ENCODE measurements at regions of chr1 and their contacts with region 1.

Region 1: GRCh38 chr1:16459352-16459925 is 18.9 kb downstream of the NECAP2 start:
- DNase-seq: no peak
- ATAC-seq: no peak
- H3K4me3 ChIP-seq: no peak overlapping the region
- H3K27ac ChIP-seq: no peak overlapping the region
- H3K4me1 ChIP-seq: no peaks in the 10 kb centered on the region
- H3K27me3 ChIP-seq: no peaks in the 10 kb centered on the region
- CTCF ChIP-seq: no peak

Region 2: DNA sequence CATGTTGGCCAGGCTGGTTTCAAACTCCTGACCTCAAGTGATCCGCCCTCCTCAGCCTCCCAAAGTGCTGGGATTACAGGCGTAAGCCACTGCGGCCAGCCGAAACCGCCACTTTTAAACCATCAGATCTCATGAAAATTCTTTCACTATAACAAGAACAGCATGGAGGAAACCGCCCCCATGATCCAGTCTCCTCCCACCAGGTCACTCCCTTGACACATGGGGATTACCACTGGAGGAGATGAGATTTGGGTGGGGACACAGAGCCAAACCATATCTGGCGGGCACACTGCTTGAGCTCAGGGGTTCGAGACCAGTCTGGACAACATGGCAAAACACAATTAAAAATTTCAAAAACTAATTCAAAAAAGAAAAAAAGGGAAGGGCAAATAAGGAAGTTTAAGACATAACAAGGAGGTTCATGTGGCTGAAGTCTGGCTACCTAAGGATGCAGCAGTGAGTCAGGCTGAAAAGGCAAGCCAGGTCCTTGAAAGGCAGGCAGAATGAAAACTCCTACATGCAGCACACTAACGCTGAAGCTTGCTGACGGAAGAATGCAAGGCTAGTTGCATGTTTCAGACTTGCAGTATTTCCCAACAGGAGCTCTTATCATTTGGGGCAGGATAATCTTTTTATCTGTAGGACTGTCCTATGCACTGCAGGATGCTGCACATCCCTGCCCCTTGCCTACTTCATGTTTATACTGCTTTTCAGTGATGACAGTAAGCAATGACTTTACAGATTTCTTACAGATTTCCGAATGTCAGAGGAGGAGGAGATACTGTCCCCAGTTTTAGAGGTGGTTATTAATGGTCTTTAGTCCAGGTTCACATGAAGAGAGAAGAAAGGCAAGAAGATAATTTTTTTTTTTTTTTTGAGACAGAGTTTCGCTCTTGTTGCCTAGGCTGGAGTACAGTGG is 156.5 kb before region 1 on chr1:
- CTCF ChIA-PET with region 1: no interaction called
- POLR2A ChIA-PET with region 1: no interaction called
- intact Hi-C with region 1: no loop called
- DNase-seq: no peak
- ATAC-seq: no peak
- H3K4me3 ChIP-seq: no peak overlapping the region
- H3K27ac ChIP-seq: no peak overlapping the region
- H3K4me1 ChIP-seq: no peaks in the 10 kb centered on the region
- H3K27me3 ChIP-seq: no peaks in the 10 kb centered on the region
- CTCF ChIP-seq: no peak

Region 3: GRCh38 chr1:16396591-16396990 is 62.8 kb before region 1 on chr1:
- CTCF ChIA-PET with region 1: no interaction called
- POLR2A ChIA-PET with region 1: interaction called, 12 read pairs
- intact Hi-C with region 1: no loop called
- DNase-seq: peak; percentile 28
- ATAC-seq: peak; percentile 84
- H3K4me3 ChIP-seq: no peak overlapping the region
- H3K27ac ChIP-seq: no peak overlapping the region
- H3K4me1 ChIP-seq: no peaks in the 10 kb centered on the region
- H3K27me3 ChIP-seq: no peaks in the 10 kb centered on the region
- CTCF ChIP-seq: no peak

Measured in PC-3 (cell line).